ENCODE measurements at regions of chr19 and their contacts with region 1.

Region 1: DNA sequence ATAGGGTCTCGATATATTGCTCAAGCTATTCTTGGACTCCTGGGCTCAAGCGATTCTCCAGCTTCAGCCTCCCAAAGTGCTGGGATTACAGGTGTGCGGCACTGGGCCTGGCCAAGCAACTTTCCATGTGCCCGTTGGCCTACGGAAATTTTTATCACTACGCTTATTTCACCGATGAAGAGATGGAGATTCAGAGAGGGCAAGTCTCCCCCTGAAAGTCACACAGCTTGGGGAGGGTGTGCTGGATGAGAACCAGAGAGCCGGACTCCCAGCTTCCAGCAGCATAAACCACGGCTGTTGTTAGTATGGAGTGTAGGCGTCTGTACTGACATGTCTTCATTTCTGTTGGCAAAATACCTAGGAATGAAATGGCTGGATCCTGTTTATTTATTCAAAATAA is 11.8 kb upstream of the GNA11 start:
- DNase-seq: no peak
- ATAC-seq: no peak
- H3K4me3 ChIP-seq: no peak overlapping the region
- H3K27ac ChIP-seq: no peak overlapping the region
- H3K4me1 ChIP-seq: peaks cover 0 to 9% (median 0%) of the 10 kb centered on the region in 9 donors
- H3K27me3 ChIP-seq: no peaks in the 10 kb centered on the region
- CTCF ChIP-seq: no peak

Region 2: DNA sequence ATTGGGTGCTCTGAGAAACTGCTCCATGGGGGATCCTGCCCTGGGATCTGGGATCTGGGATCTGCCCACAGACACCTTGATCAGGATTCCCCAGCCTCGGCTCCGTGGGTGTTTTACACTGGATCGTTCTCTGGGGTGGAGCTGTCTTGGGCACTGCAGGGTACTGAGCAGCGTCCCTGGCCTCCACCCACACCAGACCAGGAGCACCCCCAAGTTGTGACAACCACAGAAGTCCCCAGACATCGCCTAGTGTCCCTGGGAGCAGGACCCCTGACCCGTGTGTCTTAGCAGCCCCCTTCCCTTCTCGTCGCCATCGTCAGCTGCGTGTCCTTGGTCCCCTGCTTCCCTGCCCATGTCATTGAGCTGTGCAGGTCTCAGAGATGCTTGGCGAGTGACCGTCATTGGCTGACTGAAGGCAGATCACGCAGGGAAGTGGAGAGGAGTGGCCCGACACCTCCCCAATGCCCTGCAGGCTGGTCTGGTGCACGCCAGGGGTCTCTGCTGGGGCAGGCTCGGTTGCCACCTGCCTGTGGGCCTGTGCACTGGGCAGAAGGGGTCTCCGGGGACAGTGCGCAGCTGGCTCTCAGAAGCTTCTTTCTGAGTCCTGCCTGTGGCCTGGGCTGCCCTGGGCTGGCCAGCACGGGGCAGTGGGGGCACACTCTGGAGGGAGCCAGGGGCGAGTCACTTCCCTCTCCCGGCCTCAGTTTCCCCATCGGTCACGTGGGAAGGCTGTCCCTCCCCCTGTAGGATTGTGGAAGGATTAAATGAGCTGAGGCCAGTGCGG is 17.9 kb after region 1 on chr19:
- intact Hi-C with region 1: loop called in 1 of 10 experiments (anchors 2 kb)
- DNase-seq: peak in 1 of 2 donors; percentile 7
- ATAC-seq: no peak
- H3K4me3 ChIP-seq: peak overlapping the region in 1 of 10 donors; percentile 98
- H3K27ac ChIP-seq: peak overlapping the region in 9 of 10 donors; percentile 7 to 95 (median 90)
- H3K4me1 ChIP-seq: peaks cover 44 to 99% (median 92%) of the 10 kb centered on the region in 9 donors
- H3K27me3 ChIP-seq: peaks cover 0 to 25% (median 0%) of the 10 kb centered on the region in 7 donors
- CTCF ChIP-seq: no peak

Region 3: GRCh38 chr19:3142292-3142670 is 60.0 kb after region 1 on chr19:
- intact Hi-C with region 1: no loop called
- DNase-seq: no peak
- ATAC-seq: peak in 5 of 8 donors; percentile 31 to 65 (median 48)
- H3K4me3 ChIP-seq: no peak overlapping the region
- H3K27ac ChIP-seq: peak overlapping the region in 9 of 10 donors; percentile 1 to 93 (median 63)
- H3K4me1 ChIP-seq: peaks cover 0 to 52% (median 12%) of the 10 kb centered on the region in 9 donors
- H3K27me3 ChIP-seq: peaks cover 0 to 5% (median 0%) of the 10 kb centered on the region in 7 donors
- CTCF ChIP-seq: no peak

Measured in heart right ventricle (tissue), 16 donors.